Activated naive CD4-positive, alpha-beta T cell treated with anti-CD3 and anti-CD28 coated beads, Interleukin-2, amount 10 ng/mL, durations not matched to agents 7 days and 5 days (primary cell): ENCODE measurements at regions of chr10 and their contacts with region 1.

Region 1: GRCh38 chr10:132458593-132459300 is 61.7 kb downstream of the PWWP2B start:
- DNase-seq: peak; percentile 70
- H3K4me3 Mint-ChIP-seq: no peak overlapping the region
- H3K27ac Mint-ChIP-seq: no peak overlapping the region
- H3K4me1 Mint-ChIP-seq: no peaks in the 10 kb centered on the region
- H3K27me3 Mint-ChIP-seq: peaks cover 18% of the 10 kb centered on the region

Region 2: GRCh38 chr10:132551093-132551807 is 92.5 kb after region 1 on chr10:
- CTCF ChIA-PET with region 1: interaction called, 14 read pairs
- DNase-seq: peak; percentile 59
- H3K4me3 Mint-ChIP-seq: peak overlapping the region; percentile 43
- H3K27ac Mint-ChIP-seq: peak overlapping the region; percentile 87
- H3K4me1 Mint-ChIP-seq: peaks cover 38% of the 10 kb centered on the region
- H3K27me3 Mint-ChIP-seq: peaks cover 6% of the 10 kb centered on the region

Region 3: DNA sequence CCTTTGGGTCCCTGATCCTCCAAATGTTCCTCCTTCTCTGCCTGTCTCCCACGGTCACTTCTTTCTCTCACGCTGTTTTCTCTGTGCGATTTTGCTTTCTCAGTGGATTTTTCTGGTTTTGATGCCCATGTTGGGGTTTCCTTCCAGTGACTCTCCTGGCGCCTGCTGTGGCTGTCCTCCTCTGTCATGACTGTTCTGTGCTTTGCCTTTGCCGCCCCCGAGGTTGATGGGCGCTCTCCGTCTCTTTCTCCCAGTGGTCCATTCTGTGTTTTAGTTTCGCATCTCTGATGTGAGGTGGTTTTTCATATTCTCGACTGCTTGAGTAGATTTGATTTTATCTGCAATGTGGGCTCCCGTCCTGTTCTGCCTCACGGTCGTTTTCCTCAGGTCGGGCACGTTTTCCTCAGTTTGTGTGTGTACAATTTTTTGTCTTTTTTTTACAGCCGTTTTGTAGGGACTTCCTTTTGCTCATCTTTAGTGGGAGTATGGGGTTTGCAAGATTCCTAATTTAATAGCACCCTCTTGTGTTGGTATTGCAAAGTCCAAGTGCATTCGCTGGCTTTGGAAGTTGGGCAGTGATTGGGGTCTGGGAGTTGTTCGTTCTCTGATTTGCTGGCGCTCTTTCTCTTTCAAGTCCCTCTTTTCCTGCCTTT is 178.9 kb after region 1 on chr10:
- CTCF ChIA-PET with region 1: interaction called, 13 read pairs
- DNase-seq: peak; percentile 33
- H3K4me3 Mint-ChIP-seq: no peak overlapping the region
- H3K27ac Mint-ChIP-seq: no peak overlapping the region
- H3K4me1 Mint-ChIP-seq: peaks cover 10% of the 10 kb centered on the region
- H3K27me3 Mint-ChIP-seq: no peaks in the 10 kb centered on the region